Activated B cell treated with CpG ODN at 0.5 μM for 24 hours (primary cell): ENCODE measurements at regions of chr3 and their contacts with region 1.

Region 1: DNA sequence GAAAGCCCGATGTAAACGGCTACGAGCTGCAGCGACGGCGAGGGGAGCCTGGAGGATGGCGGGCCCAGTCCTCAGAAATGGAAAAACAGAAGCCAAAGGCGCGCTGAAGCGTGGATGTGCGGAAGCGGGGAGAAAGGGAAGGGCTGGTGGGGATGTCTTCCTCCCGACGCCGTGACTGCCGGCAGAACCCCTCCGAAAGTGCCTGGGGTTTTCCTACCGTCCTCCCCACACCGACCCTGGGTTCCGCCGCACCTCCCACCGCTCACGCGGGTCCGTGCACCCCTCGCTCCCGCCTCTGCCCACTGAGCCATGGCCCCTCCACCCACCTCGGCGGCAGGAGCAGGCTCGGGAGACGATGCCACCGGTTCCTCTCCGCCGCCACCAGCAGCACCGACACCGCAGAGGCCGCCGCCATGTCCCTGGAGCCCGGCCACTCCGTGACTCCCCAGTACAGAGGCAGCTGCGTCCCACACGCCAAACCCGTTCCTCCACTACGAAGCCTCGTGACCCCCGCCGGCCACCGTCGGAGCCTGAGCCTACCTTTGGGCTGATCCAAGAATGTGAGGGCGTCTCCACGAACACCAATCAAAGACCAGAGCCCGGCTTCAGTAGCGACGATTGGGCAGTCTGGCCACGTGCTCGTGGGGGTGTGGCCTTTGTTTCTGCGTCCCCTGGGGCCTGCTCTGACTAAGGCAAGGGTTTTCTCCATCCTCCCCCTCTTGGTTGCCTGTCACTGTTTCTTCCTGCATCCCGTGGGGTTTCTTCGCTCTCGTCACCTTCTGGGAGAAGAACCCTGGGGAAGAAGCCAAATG is at the start of gene MCCC1:
- DNase-seq: peak; percentile 91
- ATAC-seq: peak; percentile 96
- H3K4me3 Mint-ChIP-seq: peak within 1 kb of the TSS; percentile 97
- H3K27ac Mint-ChIP-seq: peak within 1 kb of the TSS; percentile 91
- H3K4me1 Mint-ChIP-seq: peaks cover 34% of the 10 kb centered on the region
- H3K27me3 Mint-ChIP-seq: no peaks in the 10 kb centered on the region
- CTCF ChIP-seq: no peak
- total RNA-seq, gene MCCC1: 25.2 and 31.6 TPM in 2 replicates

Region 2: DNA sequence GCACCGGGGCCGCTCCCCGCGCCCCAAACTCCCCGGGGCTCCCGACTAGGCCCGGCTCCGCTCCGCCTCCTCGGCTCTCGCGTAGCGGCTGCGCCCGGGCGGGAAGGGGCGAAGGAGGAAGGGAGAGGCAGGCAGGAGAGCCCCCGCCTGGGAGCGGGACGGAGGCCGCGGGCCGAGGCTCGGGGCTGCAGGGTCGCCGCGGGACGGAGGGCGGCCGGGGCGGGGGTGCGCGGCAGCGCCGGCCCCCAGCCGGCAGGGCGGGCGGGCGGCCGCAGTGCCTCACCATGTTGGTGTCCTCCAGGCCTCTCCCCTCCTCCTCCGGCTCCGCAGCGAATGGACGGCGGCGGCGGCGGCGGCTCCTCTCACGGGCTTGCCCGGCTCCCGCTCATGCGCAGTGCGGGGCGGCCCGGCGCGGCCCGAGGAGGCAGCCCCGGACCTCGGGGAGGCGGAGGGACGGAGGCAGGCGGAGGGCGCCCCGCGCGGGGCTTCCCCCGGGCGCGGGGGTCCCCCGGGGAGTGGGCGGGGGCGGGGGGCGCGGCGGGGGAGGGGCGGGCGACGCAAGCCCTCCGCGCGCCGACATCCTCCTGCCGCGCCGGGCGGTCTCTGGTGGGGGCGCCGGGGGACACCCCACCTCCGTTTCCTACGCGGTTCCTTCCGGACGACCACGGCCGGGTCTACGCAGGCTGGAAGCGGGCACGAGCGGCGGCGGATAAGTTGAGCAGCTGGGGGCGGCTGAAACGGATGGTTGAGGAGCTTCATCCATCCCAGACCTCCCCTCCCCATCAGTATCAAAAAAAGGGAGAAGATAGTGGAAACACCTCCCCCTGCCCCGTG is 118.8 kb before region 1 on chr3 and contains the start of gene DCUN1D1:
- CTCF ChIA-PET with region 1: no interaction called
- POLR2A ChIA-PET with region 1: no interaction called
- intact Hi-C with region 1: loop called (anchors 1 kb)
- DNase-seq: peak; percentile 90
- ATAC-seq: peak; percentile 89
- H3K4me3 Mint-ChIP-seq: peak within 1 kb of the TSS; percentile 93
- H3K27ac Mint-ChIP-seq: peak within 1 kb of the TSS; percentile 84
- H3K4me1 Mint-ChIP-seq: peaks cover 33% of the 10 kb centered on the region
- H3K27me3 Mint-ChIP-seq: no peaks in the 10 kb centered on the region
- CTCF ChIP-seq: no peak
- total RNA-seq, gene DCUN1D1: 36.7 and 44.2 TPM in 2 replicates

Region 3: GRCh38 chr3:183116025-183116614 is 16.9 kb after region 1 on chr3:
- CTCF ChIA-PET with region 1: interaction called, 3 read pairs
- POLR2A ChIA-PET with region 1: interaction called, 4 read pairs
- intact Hi-C with region 1: loop called (anchors 1 kb)
- DNase-seq: peak; percentile 63
- ATAC-seq: peak; percentile 92
- H3K4me3 Mint-ChIP-seq: peak overlapping the region; percentile 69
- H3K27ac Mint-ChIP-seq: peak overlapping the region; percentile 61
- H3K4me1 Mint-ChIP-seq: peaks cover 41% of the 10 kb centered on the region
- H3K27me3 Mint-ChIP-seq: peaks cover 16% of the 10 kb centered on the region
- CTCF ChIP-seq: no peak

Region 4: GRCh38 chr3:183161552-183162336 is 62.5 kb after region 1 on chr3:
- CTCF ChIA-PET with region 1: no interaction called
- POLR2A ChIA-PET with region 1: interaction called, 3 read pairs
- intact Hi-C with region 1: loop called (anchors 1 kb)
- DNase-seq: peak; percentile 36
- ATAC-seq: peak; percentile 78
- H3K4me3 Mint-ChIP-seq: peak overlapping the region; percentile 81
- H3K27ac Mint-ChIP-seq: peak overlapping the region; percentile 77
- H3K4me1 Mint-ChIP-seq: peaks cover 34% of the 10 kb centered on the region
- H3K27me3 Mint-ChIP-seq: peaks cover 48% of the 10 kb centered on the region
- CTCF ChIP-seq: no peak